Mammary epithelial cell (primary cell): ENCODE measurements at regions of chr7 and their contacts with region 1.

Region 1: DNA sequence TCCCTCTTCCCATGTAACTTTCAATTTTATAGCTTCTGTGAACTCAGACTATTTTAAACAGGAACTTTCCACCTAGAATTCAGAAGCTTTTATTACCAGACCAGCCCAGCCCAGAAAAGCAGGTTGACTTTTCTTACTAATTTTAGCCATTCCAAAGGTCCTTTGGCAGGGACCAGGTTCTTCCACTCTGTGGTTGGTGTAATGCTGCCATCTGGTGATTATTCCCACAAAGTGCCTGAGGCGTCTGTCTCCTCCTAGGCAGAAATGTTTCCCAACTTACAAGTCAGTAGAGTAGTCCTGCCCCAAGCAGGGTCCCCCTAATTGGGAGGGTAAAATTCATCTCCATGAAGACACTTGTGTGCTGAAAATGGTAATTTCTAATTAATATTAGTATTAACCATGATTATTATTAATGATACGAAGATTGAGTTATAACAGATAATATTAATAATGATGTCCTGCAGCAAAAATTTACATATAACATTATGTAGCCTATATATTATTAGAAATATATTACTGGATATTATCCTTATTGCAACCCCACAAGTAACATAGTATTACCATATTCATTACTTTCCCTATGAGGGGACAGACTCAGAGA is 53.0 kb upstream of the PPP1R17 start:
- DNase-seq: peak; percentile 48
- H3K4me3 ChIP-seq: no peak overlapping the region
- H3K27ac ChIP-seq: no peak overlapping the region
- H3K4me1 ChIP-seq: no peaks in the 10 kb centered on the region
- H3K27me3 ChIP-seq: no peaks in the 10 kb centered on the region
- CTCF ChIP-seq: peak; percentile 59 to 72

Region 2: DNA sequence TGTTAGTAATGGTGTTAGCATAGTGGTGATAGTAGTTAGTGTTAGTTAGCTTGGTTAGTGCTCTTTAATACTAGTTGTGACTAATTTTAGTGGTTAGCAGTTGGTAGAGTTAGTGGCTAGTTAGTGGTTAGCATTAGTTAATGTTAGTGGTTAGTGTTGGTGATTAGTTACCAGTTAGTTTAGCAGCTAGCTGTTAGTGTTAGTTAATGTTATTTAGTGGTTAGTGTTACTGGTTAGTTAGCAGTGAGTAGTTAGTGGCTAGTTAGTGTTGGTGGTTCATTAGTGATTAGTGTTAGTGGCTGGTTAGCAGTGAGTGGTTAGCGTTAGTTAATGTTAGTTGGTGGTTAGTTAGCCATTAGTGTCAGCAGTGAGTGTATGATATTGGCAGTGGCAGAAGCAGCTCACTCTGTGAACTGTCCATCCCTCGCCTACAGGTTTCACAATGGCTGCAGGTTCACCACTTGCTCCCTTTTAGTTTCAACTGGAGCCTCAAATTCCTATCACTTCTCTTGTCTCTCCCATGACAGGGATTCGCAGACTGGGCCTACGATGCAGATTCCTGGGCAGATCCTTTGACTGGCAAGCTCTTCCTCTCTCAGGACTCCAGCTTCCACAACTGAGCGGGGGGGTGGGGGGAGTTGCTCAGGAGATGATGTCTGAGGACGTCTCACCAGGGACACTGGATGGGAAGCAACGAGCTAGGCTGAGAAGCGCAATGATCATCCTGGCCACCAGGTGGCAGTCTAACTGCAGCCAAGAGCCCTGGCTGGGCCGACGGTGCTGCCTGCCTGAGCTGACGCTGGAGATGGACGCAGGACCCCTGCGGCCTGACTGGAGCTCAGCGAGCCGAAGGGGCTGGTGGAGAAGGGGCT is 650.7 kb before region 1 on chr7:
- CTCF ChIA-PET with region 1: no interaction called
- dilution Hi-C with region 1: no loop called
- in situ Hi-C with region 1: no loop called
- intact Hi-C with region 1: loop called (anchors 10 kb)
- DNase-seq: peak; percentile 62
- H3K4me3 ChIP-seq: no peak overlapping the region
- H3K27ac ChIP-seq: no peak overlapping the region
- H3K4me1 ChIP-seq: no peaks in the 10 kb centered on the region
- H3K27me3 ChIP-seq: no peaks in the 10 kb centered on the region
- CTCF ChIP-seq: peak; percentile 77 to 94

Region 3: DNA sequence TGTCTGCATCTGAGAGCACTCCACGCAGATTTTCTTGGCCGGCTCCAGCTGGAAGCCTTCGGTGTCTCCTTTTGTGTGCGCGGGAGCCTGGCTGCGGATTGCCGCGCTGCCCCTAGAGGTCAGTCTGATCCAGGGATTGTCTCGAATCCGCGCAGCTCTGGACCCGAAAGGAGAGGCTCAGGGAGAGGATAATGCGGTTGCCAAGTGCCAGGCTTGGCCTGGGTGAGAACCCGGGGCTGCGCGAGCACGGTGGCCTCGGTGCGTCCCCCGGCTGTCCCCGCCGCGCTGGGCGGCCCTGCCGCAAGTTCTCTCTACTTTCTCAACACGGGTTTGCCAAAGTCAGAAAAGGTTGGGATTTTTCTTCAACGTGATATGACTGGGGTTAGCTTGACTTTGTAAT is 441.0 kb before region 1 on chr7:
- CTCF ChIA-PET with region 1: no interaction called
- dilution Hi-C with region 1: no loop called
- in situ Hi-C with region 1: no loop called
- intact Hi-C with region 1: loop called (anchors 1 kb)
- DNase-seq: peak; percentile 52
- H3K4me3 ChIP-seq: no peak overlapping the region
- H3K27ac ChIP-seq: no peak overlapping the region
- H3K4me1 ChIP-seq: no peaks in the 10 kb centered on the region
- H3K27me3 ChIP-seq: no peaks in the 10 kb centered on the region
- CTCF ChIP-seq: peak; percentile 83 to 93

Region 4: DNA sequence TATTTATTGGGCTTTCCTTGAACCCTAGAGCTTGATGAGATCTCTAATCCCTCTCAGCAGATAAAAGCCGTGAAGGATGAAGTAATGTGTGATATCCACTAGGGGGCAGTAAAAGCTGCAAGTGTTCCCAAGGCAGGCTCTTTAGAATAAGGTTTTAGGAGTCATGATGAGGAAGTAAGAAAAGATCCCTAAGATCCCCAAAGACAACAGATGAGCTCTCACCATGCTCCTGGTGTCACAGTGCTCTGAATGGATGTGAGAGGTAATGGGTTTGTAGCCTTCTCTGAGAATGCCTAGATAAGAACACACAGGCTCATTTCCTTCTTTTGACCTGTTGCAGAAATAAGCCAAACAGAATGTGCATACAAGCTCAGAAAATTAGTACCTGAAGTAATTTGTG is 190.5 kb before region 1 on chr7:
- CTCF ChIA-PET with region 1: interaction called, 10 read pairs
- dilution Hi-C with region 1: loop called (anchors 5 kb)
- in situ Hi-C with region 1: loop called (anchors 5 to 25 kb)
- intact Hi-C with region 1: loop called (anchors 1 kb)
- DNase-seq: peak; percentile 46
- H3K4me3 ChIP-seq: no peak overlapping the region
- H3K27ac ChIP-seq: no peak overlapping the region
- H3K4me1 ChIP-seq: no peaks in the 10 kb centered on the region
- H3K27me3 ChIP-seq: no peaks in the 10 kb centered on the region
- CTCF ChIP-seq: peak; percentile 76 to 81